PC-9 (cell line): ENCODE measurements at regions of chr22 and their contacts with region 1.

Region 1: GRCh38 chr22:32781695-32782094 is 19.8 kb upstream of the TIMP3 start:
- DNase-seq: no peak
- H3K4me3 ChIP-seq: no peak overlapping the region
- H3K27ac ChIP-seq: no peak overlapping the region
- H3K4me1 ChIP-seq: peaks cover 47% of the 10 kb centered on the region
- H3K27me3 ChIP-seq: no peaks in the 10 kb centered on the region
- CTCF ChIP-seq: no peak

Region 2: DNA sequence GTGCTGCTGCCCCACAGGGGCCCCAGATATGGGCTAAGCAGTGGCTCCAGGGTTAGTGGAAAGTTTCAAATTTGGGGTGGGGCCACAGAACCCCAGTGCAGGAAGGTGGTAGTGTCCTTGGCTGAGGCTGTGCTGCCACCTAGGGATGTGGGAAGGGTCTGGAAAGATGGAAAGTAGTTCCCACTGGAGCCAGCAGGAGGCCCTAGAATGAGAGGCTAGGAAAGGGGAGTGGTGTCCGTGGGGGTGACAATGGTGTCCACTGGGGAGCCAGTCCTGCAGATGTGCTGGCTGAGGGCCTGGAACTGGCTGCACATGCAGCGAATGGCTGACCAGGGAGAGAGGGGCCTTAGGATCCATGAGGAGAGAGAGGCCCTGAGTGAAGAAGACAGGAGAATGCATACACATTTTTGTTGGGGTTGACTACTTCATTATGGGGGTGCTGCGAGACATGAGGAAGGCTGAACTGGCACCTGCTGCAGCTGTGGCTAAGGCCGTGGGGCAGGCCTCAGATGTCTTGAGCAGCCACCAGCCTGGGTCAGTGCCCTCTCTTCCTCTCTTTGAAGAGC is 402.9 kb before region 1 on chr22:
- CTCF ChIA-PET with region 1: no interaction called
- POLR2A ChIA-PET with region 1: no interaction called
- intact Hi-C with region 1: no loop called
- DNase-seq: peak; percentile 15 to 42
- H3K4me3 ChIP-seq: no peak overlapping the region
- H3K27ac ChIP-seq: no peak overlapping the region
- H3K4me1 ChIP-seq: no peaks in the 10 kb centered on the region
- H3K27me3 ChIP-seq: peaks cover 28% of the 10 kb centered on the region
- CTCF ChIP-seq: peak; percentile 68

Region 3: GRCh38 chr22:32411829-32412592 is 369.7 kb before region 1 on chr22 and contains the start of gene RTCB:
- CTCF ChIA-PET with region 1: no interaction called
- POLR2A ChIA-PET with region 1: no interaction called
- intact Hi-C with region 1: no loop called
- DNase-seq: peak; percentile 80 to 89
- H3K4me3 ChIP-seq: peak within 1 kb of the TSS; percentile 72
- H3K27ac ChIP-seq: peak within 1 kb of the TSS; percentile 59
- H3K4me1 ChIP-seq: peaks cover 17% of the 10 kb centered on the region
- H3K27me3 ChIP-seq: peaks cover 16% of the 10 kb centered on the region
- CTCF ChIP-seq: no peak
- total RNA-seq, gene RTCB: 75.9 and 76.5 TPM in 2 replicates

Region 4: DNA sequence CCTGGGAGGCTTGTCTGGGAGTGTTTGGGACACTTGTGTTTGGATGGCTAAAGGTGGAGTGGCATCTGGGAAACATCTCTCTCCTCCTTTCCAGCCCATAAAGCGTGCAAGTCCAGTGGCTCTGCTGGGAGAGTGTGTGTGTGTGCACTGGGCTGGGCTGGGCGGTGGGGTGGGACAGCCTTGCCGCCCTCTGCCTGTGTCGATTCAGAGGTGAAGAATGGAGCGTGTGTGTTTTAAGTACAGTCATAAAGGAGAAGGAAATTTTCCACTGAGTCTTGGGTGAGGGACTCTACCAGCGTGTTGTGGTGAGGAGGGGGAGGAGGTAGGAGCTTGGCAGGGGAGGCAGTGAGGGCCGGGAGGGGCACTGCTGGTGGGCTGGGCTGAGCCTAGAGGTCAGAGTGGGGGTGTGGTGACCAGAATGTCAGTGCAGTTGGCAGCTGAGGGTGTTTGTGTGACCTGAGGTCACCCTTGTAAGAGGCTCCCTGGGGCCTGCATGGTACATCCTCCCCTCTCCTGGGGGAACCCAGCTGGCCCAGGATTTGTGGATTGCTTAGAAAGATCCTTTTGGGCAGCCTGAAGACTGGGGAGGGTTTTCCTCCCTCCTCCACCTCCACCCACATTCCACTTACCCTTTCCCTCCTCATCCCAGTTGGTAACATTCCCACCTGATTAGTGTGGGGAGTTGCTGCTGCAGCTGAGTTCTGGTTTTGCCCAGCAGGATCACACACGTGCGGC is 21.5 kb after region 1 on chr22:
- CTCF ChIA-PET with region 1: no interaction called
- POLR2A ChIA-PET with region 1: interaction called, 5 read pairs
- intact Hi-C with region 1: loop called (anchors 1 kb)
- DNase-seq: peak; percentile 52 to 69
- H3K4me3 ChIP-seq: peak overlapping the region; percentile 99
- H3K27ac ChIP-seq: peak overlapping the region; percentile 49
- H3K4me1 ChIP-seq: peaks cover 53% of the 10 kb centered on the region
- H3K27me3 ChIP-seq: no peaks in the 10 kb centered on the region
- CTCF ChIP-seq: no peak